Heart right ventricle (tissue), 16 donors: ENCODE measurements at regions of chr16 and their contacts with region 1.

Region 1: GRCh38 chr16:89791278-89791995 is 25.0 kb downstream of the FANCA start:
- DNase-seq: peak in 1 of 2 donors; percentile 26
- ATAC-seq: peak in 6 of 8 donors; percentile 18 to 75 (median 44)
- H3K4me3 ChIP-seq: no peak overlapping the region
- H3K27ac ChIP-seq: no peak overlapping the region
- H3K4me1 ChIP-seq: peaks cover 0 to 3% (median 0%) of the 10 kb centered on the region in 9 donors
- H3K27me3 ChIP-seq: no peaks in the 10 kb centered on the region
- CTCF ChIP-seq: no peak

Region 2: GRCh38 chr16:89720813-89721545 is 70.5 kb before region 1 on chr16 and contains the starts of genes VPS9D1 and ZNF276:
- intact Hi-C with region 1: loop called in 1 of 10 experiments (anchors 5 kb)
- DNase-seq: peak; percentile 88
- ATAC-seq: peak; percentile 68 to 89 (median 81)
- H3K4me3 ChIP-seq: peak within 1 kb of the TSS; percentile 62 to 99 (median 90)
- H3K27ac ChIP-seq: peak within 1 kb of the TSS; percentile 89 to 100 (median 98)
- H3K4me1 ChIP-seq: peaks cover 26 to 61% (median 39%) of the 10 kb centered on the region in 9 donors
- H3K27me3 ChIP-seq: no peaks in the 10 kb centered on the region
- CTCF ChIP-seq: no peak
- total RNA-seq, gene VPS9D1: 9.3 to 15.6 (median 11.8) TPM
- total RNA-seq, gene ZNF276: 8.2 to 16.0 (median 12.8) TPM